HepG2 (cell line): ENCODE measurements at regions of chr9 and their contacts with region 1.

Region 1: DNA sequence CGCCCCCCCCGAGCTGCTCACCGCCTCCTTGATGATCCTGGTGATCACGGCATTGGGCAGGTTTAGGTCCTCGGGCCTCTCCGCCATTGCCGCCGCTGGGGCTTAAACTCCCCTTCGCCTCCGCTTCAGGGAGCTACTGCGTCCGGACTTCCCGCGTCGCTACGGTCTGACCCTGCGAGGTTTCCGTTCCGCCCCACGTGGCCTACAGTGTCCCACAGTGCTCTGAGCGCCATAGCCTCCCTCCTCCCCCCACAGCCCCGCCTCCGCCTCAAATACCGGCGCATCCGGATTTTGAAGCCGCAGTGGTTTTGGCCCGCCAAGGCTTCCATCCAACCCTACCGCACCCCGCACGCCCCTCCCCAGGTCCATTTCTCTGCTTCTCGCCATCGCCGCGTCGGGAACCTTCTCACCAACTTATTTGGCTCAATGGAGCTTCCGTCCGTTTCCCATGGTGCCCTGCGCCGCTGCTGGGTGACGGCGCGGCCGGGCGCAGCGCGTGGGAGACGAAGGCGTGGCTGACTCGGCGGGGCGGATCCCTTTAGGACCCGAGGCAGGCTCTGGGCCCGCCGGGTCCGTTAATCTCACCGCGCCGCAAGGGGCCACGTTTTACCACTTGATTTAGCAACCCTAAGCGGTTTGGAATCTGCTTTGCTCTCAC is at the starts of genes C9orf43 and POLE3:
- DNase-seq: peak; percentile 91
- ATAC-seq: peak; percentile 97
- H3K4me3 ChIP-seq: peak within 1 kb of the TSS; percentile 91 to 98 (median 95)
- H3K27ac ChIP-seq: peak within 1 kb of the TSS; percentile 91
- H3K4me1 ChIP-seq: peaks cover 37% of the 10 kb centered on the region
- H3K27me3 ChIP-seq: no peaks in the 10 kb centered on the region; a peak in 1 of 5 replicates
- CTCF ChIP-seq: peak; percentile 42
- EP300 ChIP-seq: peak; percentile 34 to 42; a peak in 1 of 4 replicates
- POLR2A ChIP-seq: peak; percentile 79 to 81
- RAD21 ChIP-seq: 0 out of 2 replicates have a peak, but pooled peaks have one; percentile 13
- total RNA-seq, gene C9orf43: 0.18 and 0.31 TPM in 2 replicates
- total RNA-seq, gene POLE3: 77.2 and 93.1 TPM in 2 replicates

Region 2: DNA sequence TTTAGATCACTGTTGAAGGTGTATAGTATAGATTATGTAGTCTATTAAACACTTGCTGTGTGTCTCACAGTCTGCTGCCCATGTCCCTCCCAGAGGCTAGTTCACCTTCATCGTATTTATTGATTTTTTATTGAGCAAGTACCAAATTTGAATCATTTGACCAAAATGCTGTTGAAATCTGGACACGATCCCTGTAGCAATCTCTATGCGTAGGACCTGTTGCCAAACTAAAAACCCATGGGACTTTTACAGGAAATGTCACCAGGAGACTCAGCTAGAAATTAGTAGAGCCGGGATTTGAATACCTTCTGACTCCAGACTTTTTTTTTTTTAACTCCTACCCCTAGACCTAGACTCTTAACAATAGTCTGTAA is 171.5 kb before region 1 on chr9:
- CTCF ChIA-PET with region 1: no interaction called
- POLR2A ChIA-PET with region 1: no interaction called
- in situ Hi-C with region 1: no loop called
- intact Hi-C with region 1: no loop called
- DNase-seq: no peak
- ATAC-seq: no peak
- H3K4me3 ChIP-seq: no peak overlapping the region
- H3K27ac ChIP-seq: no peak overlapping the region
- H3K4me1 ChIP-seq: peaks cover 10% of the 10 kb centered on the region; the same call in 1 of the 2 replicates
- H3K27me3 ChIP-seq: no peaks in the 10 kb centered on the region
- CTCF ChIP-seq: no peak
- EP300 ChIP-seq: no peak
- POLR2A ChIP-seq: no peak
- RAD21 ChIP-seq: no peak

Region 3: GRCh38 chr9:113275157-113276131 is 134.9 kb before region 1 on chr9 and contains the starts of genes CDC26 and PRPF4:
- CTCF ChIA-PET with region 1: interaction called, 3 read pairs
- POLR2A ChIA-PET with region 1: interaction called, 40 read pairs
- in situ Hi-C with region 1: no loop called
- intact Hi-C with region 1: loop called (anchors 10 kb)
- DNase-seq: peak; percentile 97
- ATAC-seq: peak; percentile 95
- H3K4me3 ChIP-seq: peak within 1 kb of the TSS; percentile 75 to 98 (median 82)
- H3K27ac ChIP-seq: peak within 1 kb of the TSS; percentile 85
- H3K4me1 ChIP-seq: peaks cover 42% of the 10 kb centered on the region
- H3K27me3 ChIP-seq: no peaks in the 10 kb centered on the region; a peak in 2 of 5 replicates
- CTCF ChIP-seq: peak; percentile 23; the same call in 1 of the 2 replicates
- EP300 ChIP-seq: peak in 1 of 2 experiments; percentile 16; a peak in 1 of 4 replicates
- POLR2A ChIP-seq: peak; percentile 91 to 97
- RAD21 ChIP-seq: 0 out of 2 replicates have a peak, but pooled peaks have one; percentile 31
- total RNA-seq, gene CDC26: 57.9 and 66.0 TPM in 2 replicates
- total RNA-seq, gene PRPF4: 49.0 and 64.9 TPM in 2 replicates

Region 4: DNA sequence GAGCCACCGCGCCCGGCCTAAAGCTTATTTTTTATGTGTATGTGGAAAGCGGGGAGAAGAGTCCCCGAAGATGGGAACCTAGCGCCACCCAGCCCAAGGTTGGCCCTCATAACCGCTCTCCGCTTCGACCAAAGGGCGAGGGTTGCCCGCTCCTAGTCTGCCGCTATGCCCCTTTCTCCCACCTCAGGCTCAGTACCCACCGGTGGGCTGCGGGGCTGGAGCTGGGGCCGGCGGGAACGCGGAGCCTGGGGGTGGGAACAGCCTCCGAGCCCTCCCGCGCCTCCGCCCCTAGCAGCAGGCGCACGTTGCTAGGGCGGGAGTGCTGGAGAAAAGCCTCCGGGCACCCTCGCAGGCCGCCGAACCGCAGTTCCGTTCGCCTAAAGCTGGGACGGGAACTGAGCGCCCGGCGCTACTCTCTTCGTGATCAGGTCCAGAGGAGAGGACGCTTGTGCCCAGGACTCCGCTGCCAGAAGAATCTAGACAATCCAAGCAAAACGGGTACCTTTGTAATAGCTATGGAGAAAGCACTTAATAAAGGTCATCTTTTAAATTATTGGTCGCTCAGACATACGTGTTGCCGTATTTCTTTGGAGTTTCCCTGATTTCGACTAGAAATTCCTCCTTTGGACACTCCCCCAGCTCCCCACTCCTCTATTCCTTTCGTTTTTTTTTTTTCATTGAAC is 70.2 kb before region 1 on chr9 and contains the start of gene WDR31:
- CTCF ChIA-PET with region 1: interaction called, 4 read pairs
- POLR2A ChIA-PET with region 1: interaction called, 23 read pairs
- in situ Hi-C with region 1: no loop called
- intact Hi-C with region 1: no loop called
- DNase-seq: peak; percentile 73
- ATAC-seq: peak; percentile 96
- H3K4me3 ChIP-seq: peak within 1 kb of the TSS; percentile 65 to 79 (median 65)
- H3K27ac ChIP-seq: peak within 1 kb of the TSS; percentile 53
- H3K4me1 ChIP-seq: peaks cover 28% of the 10 kb centered on the region
- H3K27me3 ChIP-seq: no peaks in the 10 kb centered on the region
- CTCF ChIP-seq: peak; percentile 43; the same call in 1 of the 2 replicates
- EP300 ChIP-seq: peak in 1 of 2 experiments; percentile 56; a peak in 1 of 4 replicates
- POLR2A ChIP-seq: peak; percentile 52 to 84; a peak in 3 of 4 replicates
- RAD21 ChIP-seq: peak; percentile 58
- total RNA-seq, gene WDR31: 0.33 and 0.56 TPM in 2 replicates

Region 5: GRCh38 chr9:113376634-113377567 is 33.4 kb before region 1 on chr9 and contains the start of gene HDHD3:
- CTCF ChIA-PET with region 1: no interaction called
- POLR2A ChIA-PET with region 1: interaction called, 20 read pairs
- in situ Hi-C with region 1: no loop called
- intact Hi-C with region 1: no loop called
- DNase-seq: peak; percentile 71
- ATAC-seq: peak; percentile 83
- H3K4me3 ChIP-seq: peak within 1 kb of the TSS; percentile 80 to 99 (median 84)
- H3K27ac ChIP-seq: peak within 1 kb of the TSS; percentile 94
- H3K4me1 ChIP-seq: peaks cover 80% of the 10 kb centered on the region
- H3K27me3 ChIP-seq: no peaks in the 10 kb centered on the region
- CTCF ChIP-seq: no peak
- EP300 ChIP-seq: no peak
- POLR2A ChIP-seq: peak; percentile 70 to 89
- RAD21 ChIP-seq: peak; percentile 62
- total RNA-seq, gene HDHD3: 23.0 and 23.1 TPM in 2 replicates

Region 6: GRCh38 chr9:113395000-113395861 is 15.1 kb before region 1 on chr9:
- CTCF ChIA-PET with region 1: no interaction called
- POLR2A ChIA-PET with region 1: interaction called, 50 read pairs
- in situ Hi-C with region 1: no loop called
- intact Hi-C with region 1: no loop called
- DNase-seq: peak; percentile 87
- ATAC-seq: peak; percentile 89
- H3K4me3 ChIP-seq: 0 out of 6 replicates have a peak overlapping the region, but pooled peaks of 1 of the 3 experiments have one; percentile 22
- H3K27ac ChIP-seq: peak overlapping the region; percentile 63
- H3K4me1 ChIP-seq: peaks cover 86% of the 10 kb centered on the region
- H3K27me3 ChIP-seq: no peaks in the 10 kb centered on the region
- CTCF ChIP-seq: peak; percentile 18; the same call in 1 of the 2 replicates
- EP300 ChIP-seq: peak in 1 of 2 experiments; percentile 83; a peak in 2 of 4 replicates
- POLR2A ChIP-seq: no peak
- RAD21 ChIP-seq: no peak